ENCODE measurements at regions of chr5 and their contacts with region 1.

Region 1: DNA sequence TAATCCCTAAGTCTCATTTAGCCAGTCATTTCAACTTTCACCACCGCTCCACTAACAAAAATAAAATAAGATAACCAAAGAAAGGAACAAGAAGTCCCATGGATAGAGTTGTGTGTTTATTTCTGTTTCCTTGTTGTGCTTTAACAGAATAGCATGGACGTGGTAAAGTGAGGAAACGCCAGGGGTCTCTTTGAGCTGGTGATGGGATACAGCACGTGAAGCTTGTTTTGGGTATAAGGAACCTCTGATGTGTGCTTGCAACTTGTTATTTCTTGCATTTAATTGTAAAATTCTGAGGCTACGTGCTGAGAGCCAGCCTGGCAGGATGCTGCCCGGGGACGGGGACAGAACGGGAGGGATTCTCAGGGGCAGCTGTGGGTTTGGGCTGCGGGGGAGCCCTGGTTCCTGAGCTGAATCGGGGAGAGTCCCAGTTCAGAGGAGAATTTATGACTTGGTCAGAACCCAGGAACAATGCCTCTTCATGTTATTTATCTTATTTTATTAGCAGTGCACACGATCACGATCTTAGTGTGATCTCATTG is 63.4 kb downstream of the ANKRD33B start:
- DNase-seq: no peak
- ATAC-seq: peak; percentile 12
- H3K4me3 ChIP-seq: peak overlapping the region; percentile 29
- H3K27ac ChIP-seq: peak overlapping the region; percentile 64
- H3K4me1 ChIP-seq: peaks cover 62% of the 10 kb centered on the region
- H3K27me3 ChIP-seq: no peaks in the 10 kb centered on the region
- CTCF ChIP-seq: no peak
- EP300 ChIP-seq: no peak
- POLR2A ChIP-seq: no peak
- RAD21 ChIP-seq: no peak

Region 2: GRCh38 chr5:10283927-10284635 is 343.1 kb before region 1 on chr5:
- CTCF ChIA-PET with region 1: interaction called, 17 read pairs
- POLR2A ChIA-PET with region 1: no interaction called
- RAD21 ChIA-PET with region 1: interaction called, 11 read pairs
- SMC1A ChIA-PET with region 1: interaction called, 6 read pairs
- in situ Hi-C with region 1: no loop called
- intact Hi-C with region 1: loop called (anchors 5 kb)
- DNase-seq: peak; percentile 40
- ATAC-seq: peak; percentile 99
- H3K4me3 ChIP-seq: no peak overlapping the region
- H3K27ac ChIP-seq: no peak overlapping the region; the same call in 1 of the 2 replicates
- H3K4me1 ChIP-seq: peaks cover 17% of the 10 kb centered on the region
- H3K27me3 ChIP-seq: no peaks in the 10 kb centered on the region
- CTCF ChIP-seq: peak; percentile 86 to 96 (median 95)
- EP300 ChIP-seq: no peak
- POLR2A ChIP-seq: no peak
- RAD21 ChIP-seq: peak; percentile 80

Region 3: GRCh38 chr5:10489810-10490426 is 137.3 kb before region 1 on chr5:
- CTCF ChIA-PET with region 1: interaction called, 16 read pairs
- POLR2A ChIA-PET with region 1: interaction called, 4 read pairs
- RAD21 ChIA-PET with region 1: interaction called, 14 read pairs
- SMC1A ChIA-PET with region 1: interaction called, 18 read pairs
- in situ Hi-C with region 1: no loop called
- intact Hi-C with region 1: no loop called
- DNase-seq: peak; percentile 37
- ATAC-seq: peak; percentile 95
- H3K4me3 ChIP-seq: peak overlapping the region; percentile 3; the same call in 1 of the 2 replicates
- H3K27ac ChIP-seq: no peak overlapping the region
- H3K4me1 ChIP-seq: peaks cover 30% of the 10 kb centered on the region
- H3K27me3 ChIP-seq: no peaks in the 10 kb centered on the region
- CTCF ChIP-seq: no peak
- EP300 ChIP-seq: no peak
- POLR2A ChIP-seq: no peak
- RAD21 ChIP-seq: peak; percentile 15; the same call in 1 of the 2 replicates

Region 4: DNA sequence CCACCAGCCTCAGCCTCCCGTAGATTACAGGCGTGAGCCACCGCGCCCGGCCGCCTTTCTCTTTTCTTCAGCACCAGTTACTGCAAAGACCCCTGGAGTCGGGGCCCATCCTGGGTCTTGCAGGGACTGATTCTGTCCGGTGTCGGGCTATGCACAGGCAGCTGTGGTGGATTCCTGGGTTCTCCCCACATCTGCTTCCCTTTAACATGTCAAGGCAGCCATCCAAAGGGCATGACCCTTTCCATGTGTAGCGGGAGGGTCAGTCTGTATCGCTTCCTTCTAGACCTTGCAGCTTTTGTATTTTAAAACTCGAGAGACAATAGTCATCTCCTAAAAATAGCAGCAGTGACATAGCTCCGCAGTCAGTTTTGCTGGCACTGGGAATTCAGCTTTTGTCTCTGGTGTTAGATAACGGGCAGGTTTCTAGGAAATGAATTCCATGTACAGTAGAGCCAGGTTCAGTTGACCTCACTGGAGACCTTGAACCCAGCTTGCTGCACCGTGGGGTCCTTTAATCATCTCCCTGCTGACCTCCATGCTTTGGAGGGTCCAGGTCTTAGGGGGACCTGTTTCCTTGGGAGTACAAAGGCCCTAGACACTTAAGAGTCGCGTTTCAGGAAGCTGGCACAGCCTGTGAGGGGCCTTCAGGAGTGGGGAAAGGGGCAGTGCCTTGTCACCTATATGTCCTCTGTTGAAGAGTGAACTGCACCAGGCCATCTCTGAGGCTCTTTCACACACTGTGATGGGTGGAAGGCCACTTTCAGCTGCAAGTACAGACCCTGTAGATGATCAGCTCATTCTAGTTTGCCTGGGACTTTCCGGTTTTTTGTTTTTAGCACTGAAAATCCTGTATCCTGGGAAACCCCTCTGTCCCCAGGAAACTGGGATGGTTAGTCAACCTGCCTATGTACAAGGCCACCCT is 49.6 kb before region 1 on chr5:
- CTCF ChIA-PET with region 1: interaction called, 83 read pairs
- POLR2A ChIA-PET with region 1: interaction called, 7 read pairs
- RAD21 ChIA-PET with region 1: interaction called, 45 read pairs
- SMC1A ChIA-PET with region 1: interaction called, 51 read pairs
- in situ Hi-C with region 1: no loop called
- intact Hi-C with region 1: loop called (anchors 1 kb)
- DNase-seq: no peak
- ATAC-seq: peak; percentile 68
- H3K4me3 ChIP-seq: peak overlapping the region; percentile 46; the same call in 1 of the 2 replicates
- H3K27ac ChIP-seq: peak overlapping the region; percentile 77
- H3K4me1 ChIP-seq: peaks cover 64% of the 10 kb centered on the region
- H3K27me3 ChIP-seq: no peaks in the 10 kb centered on the region
- CTCF ChIP-seq: no peak
- EP300 ChIP-seq: no peak
- POLR2A ChIP-seq: no peak; the same call in 1 of the 2 replicates
- RAD21 ChIP-seq: no peak

Region 5: GRCh38 chr5:10607666-10608073 is 19.6 kb before region 1 on chr5:
- CTCF ChIA-PET with region 1: interaction called, 157 read pairs
- POLR2A ChIA-PET with region 1: interaction called, 20 read pairs
- RAD21 ChIA-PET with region 1: interaction called, 79 read pairs
- SMC1A ChIA-PET with region 1: interaction called, 192 read pairs
- in situ Hi-C with region 1: no loop called
- intact Hi-C with region 1: loop called (anchors 1 kb)
- DNase-seq: peak; percentile 63
- ATAC-seq: peak; percentile 73
- H3K4me3 ChIP-seq: peak overlapping the region; percentile 16
- H3K27ac ChIP-seq: peak overlapping the region; percentile 87
- H3K4me1 ChIP-seq: peaks cover 56% of the 10 kb centered on the region
- H3K27me3 ChIP-seq: no peaks in the 10 kb centered on the region
- CTCF ChIP-seq: peak; percentile 32 to 52 (median 32); a peak in 4 of 6 replicates
- EP300 ChIP-seq: peak; percentile 58 to 63; a peak in 2 of 4 replicates
- POLR2A ChIP-seq: no peak
- RAD21 ChIP-seq: peak; percentile 51

Region 6: DNA sequence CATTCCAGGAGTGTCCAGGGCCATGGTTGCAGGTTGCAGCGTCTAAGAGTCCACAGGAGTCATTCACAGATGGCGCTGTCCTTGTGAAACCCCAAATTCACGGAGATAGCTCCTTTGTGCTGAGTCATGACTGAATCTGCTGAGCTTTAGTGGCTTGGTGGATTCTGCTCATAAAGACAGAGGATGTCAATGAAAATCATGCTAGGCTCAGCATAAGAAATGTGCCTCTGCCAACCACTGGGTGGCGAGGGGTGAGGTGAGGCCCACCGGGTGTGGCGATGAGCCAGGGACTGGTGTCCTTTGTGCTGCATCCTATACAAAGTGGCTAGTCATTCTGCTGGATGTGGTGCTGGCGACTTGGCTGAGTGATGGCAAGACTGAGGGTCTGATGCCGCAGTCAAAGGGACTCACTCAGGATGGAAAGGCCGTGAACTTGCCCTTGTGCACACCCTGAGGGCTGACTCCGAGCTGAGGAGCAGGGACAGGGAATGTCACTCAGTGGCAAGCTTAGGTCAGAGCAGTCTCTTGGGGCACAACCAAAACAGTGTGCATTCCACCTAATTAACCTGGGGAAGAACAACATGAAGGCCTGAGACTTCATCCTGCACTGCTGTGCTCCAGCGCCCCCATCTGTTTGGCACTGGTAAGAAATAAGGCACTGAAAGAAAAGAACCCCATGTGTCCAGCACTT is 62.3 kb after region 1 on chr5:
- CTCF ChIA-PET with region 1: interaction called, 50 read pairs
- POLR2A ChIA-PET with region 1: interaction called, 39 read pairs
- RAD21 ChIA-PET with region 1: interaction called, 93 read pairs
- SMC1A ChIA-PET with region 1: interaction called, 90 read pairs
- in situ Hi-C with region 1: no loop called
- intact Hi-C with region 1: no loop called
- DNase-seq: no peak
- ATAC-seq: peak; percentile 75
- H3K4me3 ChIP-seq: no peak overlapping the region
- H3K27ac ChIP-seq: no peak overlapping the region
- H3K4me1 ChIP-seq: peaks cover 19% of the 10 kb centered on the region
- H3K27me3 ChIP-seq: no peaks in the 10 kb centered on the region
- CTCF ChIP-seq: peak; percentile 36 to 79 (median 67); a peak in 5 of 6 replicates
- EP300 ChIP-seq: no peak
- POLR2A ChIP-seq: no peak
- RAD21 ChIP-seq: peak; percentile 76

Region 7: DNA sequence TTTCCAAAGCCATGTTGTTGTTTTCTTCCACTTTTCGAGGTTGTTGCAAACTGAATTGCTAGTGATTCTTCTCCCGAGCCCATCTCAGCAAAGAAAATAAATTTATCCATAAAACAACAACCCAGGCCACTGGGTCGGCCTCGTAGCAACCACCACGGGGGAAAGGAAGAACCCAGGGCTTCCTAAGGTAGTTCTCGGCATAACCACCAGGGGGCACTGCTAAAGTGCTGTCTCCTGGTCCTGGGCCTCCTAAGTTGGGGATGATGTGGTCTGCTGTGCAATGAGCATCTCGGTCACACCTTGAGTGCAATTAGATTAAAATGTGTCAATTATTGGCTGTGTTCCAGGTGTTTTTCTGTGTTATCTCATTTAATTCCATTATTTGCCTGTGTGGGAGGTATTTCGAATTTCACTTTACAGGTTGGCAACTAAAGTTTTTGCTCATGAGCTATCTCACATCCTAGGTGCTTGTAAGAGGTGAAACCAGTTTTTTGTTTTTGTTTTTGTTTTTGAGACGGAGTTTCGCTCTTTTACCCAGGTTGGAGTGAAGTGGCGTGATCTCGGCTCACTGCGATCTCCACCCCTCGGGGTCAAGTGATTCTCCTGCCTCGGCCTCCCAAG is 236.6 kb after region 1 on chr5:
- CTCF ChIA-PET with region 1: no interaction called
- POLR2A ChIA-PET with region 1: no interaction called
- RAD21 ChIA-PET with region 1: no interaction called
- SMC1A ChIA-PET with region 1: no interaction called
- in situ Hi-C with region 1: no loop called
- intact Hi-C with region 1: no loop called
- DNase-seq: peak; percentile 8
- ATAC-seq: peak; percentile 98
- H3K4me3 ChIP-seq: no peak overlapping the region
- H3K27ac ChIP-seq: no peak overlapping the region
- H3K4me1 ChIP-seq: no peaks in the 10 kb centered on the region
- H3K27me3 ChIP-seq: peaks cover under 1 to 1% of the 10 kb centered on the region in 2 experiments; a peak in 1 of 4 replicates
- CTCF ChIP-seq: peak; percentile 75 to 93 (median 91)
- EP300 ChIP-seq: no peak
- POLR2A ChIP-seq: no peak
- RAD21 ChIP-seq: peak; percentile 66